ENCODE measurements at regions of chrX and their contacts with region 1.

Region 1: DNA sequence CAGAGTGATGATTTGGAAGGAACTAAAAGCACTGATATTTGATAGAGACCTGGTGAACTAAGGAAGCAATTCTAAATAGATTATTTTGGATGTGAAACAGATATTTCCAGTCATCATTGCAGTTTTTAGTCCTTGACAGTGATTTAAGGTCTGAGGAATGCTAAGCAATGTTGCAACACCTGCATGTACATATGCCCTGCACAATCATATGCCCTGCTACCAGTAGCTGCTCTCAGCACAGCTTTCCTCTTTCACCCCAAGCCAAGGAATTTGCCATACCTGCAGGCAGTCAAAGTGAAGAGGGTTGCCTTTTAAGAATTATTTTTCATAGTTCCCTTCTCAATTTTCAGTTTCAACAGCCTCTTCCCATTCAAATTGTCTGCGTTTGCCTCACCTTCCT is 8.7 kb upstream of the FAM47A start:
- DNase-seq: no peak
- ATAC-seq: no peak
- H3K4me3 ChIP-seq: no peak overlapping the region
- H3K27ac ChIP-seq: no peak overlapping the region
- H3K4me1 ChIP-seq: no peaks in the 10 kb centered on the region
- H3K27me3 ChIP-seq: no peaks in the 10 kb centered on the region
- CTCF ChIP-seq: no peak

Region 2: GRCh38 chrX:34382416-34382815 is 241.6 kb after region 1 on chrX:
- intact Hi-C with region 1: loop called in 1 of 10 experiments (anchors 5 kb)
- DNase-seq: no peak
- ATAC-seq: no peak
- H3K4me3 ChIP-seq: no peak overlapping the region
- H3K27ac ChIP-seq: no peak overlapping the region
- H3K4me1 ChIP-seq: no peaks in the 10 kb centered on the region
- H3K27me3 ChIP-seq: no peaks in the 10 kb centered on the region
- CTCF ChIP-seq: no peak

Region 3: DNA sequence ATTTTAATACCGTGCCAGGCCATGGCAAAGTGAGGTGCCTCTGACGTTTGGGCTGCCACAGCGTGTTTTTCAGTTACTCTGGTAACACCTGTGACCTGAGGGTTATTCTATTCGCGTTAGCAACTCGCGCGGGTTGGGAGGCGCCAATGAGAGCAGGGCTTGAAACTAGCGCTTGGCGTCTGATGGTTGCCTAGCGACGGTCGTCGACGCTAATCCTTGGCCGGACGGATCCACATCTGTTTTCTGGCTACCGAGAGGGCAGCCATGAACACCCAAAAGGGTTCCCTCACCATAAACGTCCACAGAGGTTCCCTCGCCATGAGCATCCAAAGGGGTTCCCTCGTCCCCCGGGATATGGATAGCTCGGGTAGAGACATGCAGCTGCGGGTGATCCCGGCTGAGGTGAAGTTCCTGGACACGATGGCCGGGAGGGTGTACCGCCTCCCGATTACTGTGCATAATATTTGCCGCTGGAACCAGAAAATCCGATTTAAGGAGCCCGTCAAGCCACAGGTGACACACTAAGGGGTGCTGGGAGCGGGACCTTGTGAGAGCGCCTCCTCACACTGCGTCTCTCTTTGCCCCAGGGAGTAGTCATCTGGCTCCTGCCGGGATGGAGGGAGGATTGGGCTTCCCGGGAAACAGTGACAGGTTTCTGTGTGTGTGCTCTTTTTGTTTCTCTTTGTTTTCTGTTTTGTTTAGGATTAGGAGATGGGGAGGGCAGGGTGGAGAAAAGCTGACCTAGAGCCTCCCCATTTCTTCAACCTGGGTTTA is 1778.9 kb after region 1 on chrX and contains the start of gene CFAP47:
- intact Hi-C with region 1: no loop called
- DNase-seq: no peak
- ATAC-seq: peak in 2 of 8 donors; percentile 29 to 35
- H3K4me3 ChIP-seq: peak within 1 kb of the TSS in 6 of 10 donors; percentile 11 to 32 (median 27)
- H3K27ac ChIP-seq: no peak within 1 kb of the TSS
- H3K4me1 ChIP-seq: no peaks in the 10 kb centered on the region
- H3K27me3 ChIP-seq: no peaks in the 10 kb centered on the region
- CTCF ChIP-seq: no peak
- total RNA-seq, gene CFAP47: 0.05 to 0.07 TPM in 2 of 10 donors, not detected in the others

Measured in heart right ventricle (tissue), 16 donors.